ENCODE measurements at regions of chr19 and their contacts with region 1.

Region 1: GRCh38 chr19:46614114-46614722 is 10.7 kb downstream of the PTGIR start:
- DNase-seq: peak; percentile 82
- ATAC-seq: peak; percentile 71
- H3K4me3 Mint-ChIP-seq: no peak overlapping the region
- H3K27ac Mint-ChIP-seq: peak overlapping the region; percentile 63
- H3K4me1 Mint-ChIP-seq: peaks cover 66% of the 10 kb centered on the region
- H3K27me3 Mint-ChIP-seq: no peaks in the 10 kb centered on the region
- CTCF ChIP-seq: peak; percentile 42

Region 2: DNA sequence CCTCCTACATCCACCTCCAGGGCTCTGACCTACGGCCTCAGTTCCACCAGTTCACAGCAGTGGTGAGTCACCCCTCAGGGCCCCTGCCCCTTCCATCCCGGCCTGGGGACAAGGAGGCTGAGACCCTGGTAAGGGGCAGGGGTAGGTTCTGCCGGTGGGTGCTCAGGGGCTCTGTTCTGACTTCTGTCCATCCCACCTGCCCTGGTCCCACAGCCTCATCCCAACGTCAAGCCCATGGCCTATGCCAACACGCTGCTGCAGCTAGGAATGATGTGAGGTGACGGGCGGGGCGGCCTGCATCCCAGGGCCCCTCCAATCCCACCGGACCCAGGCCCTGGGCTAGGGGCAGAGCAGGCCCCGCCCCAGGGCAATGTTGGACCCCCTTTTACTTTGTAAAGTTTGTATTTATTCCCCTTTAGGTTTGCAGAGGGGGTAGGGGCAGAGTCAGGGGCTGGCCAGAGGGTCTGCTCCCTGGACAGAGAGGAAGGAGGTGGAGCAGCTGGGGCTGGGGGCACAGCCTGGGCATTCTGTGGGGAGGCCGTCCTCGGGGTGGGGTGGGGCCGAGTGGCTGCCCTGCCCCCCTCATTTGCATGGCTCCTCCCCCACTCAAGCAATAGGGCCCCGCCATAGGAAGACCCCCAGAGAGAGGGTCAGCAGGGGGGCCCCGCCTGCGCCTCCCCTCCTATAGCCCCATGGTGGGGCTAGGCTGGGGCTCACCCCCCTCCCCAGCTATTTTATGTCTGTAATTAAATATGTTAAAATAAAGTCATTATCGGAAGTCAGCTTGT is 224.0 kb before region 1 on chr19:
- CTCF ChIA-PET with region 1: no interaction called
- POLR2A ChIA-PET with region 1: no interaction called
- intact Hi-C with region 1: no loop called
- DNase-seq: no peak
- ATAC-seq: no peak
- H3K4me3 Mint-ChIP-seq: no peak overlapping the region
- H3K27ac Mint-ChIP-seq: no peak overlapping the region
- H3K4me1 Mint-ChIP-seq: no peaks in the 10 kb centered on the region
- H3K27me3 Mint-ChIP-seq: no peaks in the 10 kb centered on the region
- CTCF ChIP-seq: no peak

Region 3: DNA sequence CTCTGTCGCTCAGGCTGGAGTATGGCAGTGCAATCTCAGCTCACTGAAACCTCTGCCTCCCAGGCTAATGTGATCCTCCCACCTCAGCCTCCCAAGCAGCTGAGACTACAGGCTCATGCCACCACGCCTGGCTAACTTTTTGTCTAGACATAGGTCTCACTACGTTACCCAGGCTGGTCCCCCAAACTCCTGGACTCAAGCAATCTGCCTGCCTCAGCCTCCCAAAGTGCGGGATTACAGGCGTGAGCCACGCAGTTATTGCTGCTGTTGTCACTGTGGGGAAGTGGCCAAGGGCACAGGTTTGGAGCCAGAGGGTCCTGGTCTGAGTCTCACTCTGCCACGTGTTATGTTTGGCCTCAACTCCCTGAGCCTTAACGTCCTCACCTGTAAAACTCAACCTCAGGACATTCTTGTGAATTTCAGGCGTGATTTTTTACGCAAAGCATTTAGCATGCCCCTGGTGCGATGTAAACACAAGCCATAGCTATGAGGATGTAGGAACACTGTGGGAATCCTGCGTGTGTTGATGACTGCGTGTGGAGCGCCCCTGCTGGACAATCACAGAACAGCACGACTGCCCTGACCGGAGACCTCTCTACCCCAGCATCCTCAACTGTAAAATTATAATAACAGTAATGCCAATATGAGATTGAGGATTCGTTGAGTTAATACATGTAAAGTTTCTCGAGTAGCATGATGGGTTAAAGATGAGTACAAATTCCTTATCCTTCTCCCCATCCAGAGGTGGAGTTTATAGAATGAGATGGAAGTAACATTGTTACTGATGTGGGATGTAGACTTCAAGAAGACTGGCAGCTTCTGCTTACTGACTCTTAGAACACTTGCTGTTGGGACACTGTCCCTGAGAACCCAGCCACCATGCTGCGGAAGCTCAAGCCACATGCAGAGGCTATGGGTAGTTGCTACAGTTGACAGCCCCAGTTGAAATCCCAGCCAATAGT is 76.8 kb before region 1 on chr19:
- CTCF ChIA-PET with region 1: no interaction called
- POLR2A ChIA-PET with region 1: no interaction called
- intact Hi-C with region 1: loop called (anchors 5 kb)
- DNase-seq: peak; percentile 57
- ATAC-seq: peak; percentile 84
- H3K4me3 Mint-ChIP-seq: no peak overlapping the region
- H3K27ac Mint-ChIP-seq: no peak overlapping the region
- H3K4me1 Mint-ChIP-seq: peaks cover 3% of the 10 kb centered on the region
- H3K27me3 Mint-ChIP-seq: peaks cover 6% of the 10 kb centered on the region
- CTCF ChIP-seq: peak; percentile 90

Region 4: GRCh38 chr19:46634045-46634655 is 19.9 kb after region 1 on chr19:
- CTCF ChIA-PET with region 1: interaction called, 15 read pairs
- POLR2A ChIA-PET with region 1: interaction called, 99 read pairs
- intact Hi-C with region 1: loop called (anchors 1 kb)
- DNase-seq: peak; percentile 92
- ATAC-seq: peak; percentile 80
- H3K4me3 Mint-ChIP-seq: peak overlapping the region; percentile 81
- H3K27ac Mint-ChIP-seq: peak overlapping the region; percentile 64
- H3K4me1 Mint-ChIP-seq: peaks cover 30% of the 10 kb centered on the region
- H3K27me3 Mint-ChIP-seq: no peaks in the 10 kb centered on the region
- CTCF ChIP-seq: no peak

Measured in activated B cell treated with CpG ODN at 0.5 μM for 24 hours (primary cell).